Activated CD4-positive, alpha-beta T cell treated with anti-CD3 and anti-CD28 coated beads for 36 hours (primary cell): ENCODE measurements at regions of chr19 and their contacts with region 1.

Region 1: DNA sequence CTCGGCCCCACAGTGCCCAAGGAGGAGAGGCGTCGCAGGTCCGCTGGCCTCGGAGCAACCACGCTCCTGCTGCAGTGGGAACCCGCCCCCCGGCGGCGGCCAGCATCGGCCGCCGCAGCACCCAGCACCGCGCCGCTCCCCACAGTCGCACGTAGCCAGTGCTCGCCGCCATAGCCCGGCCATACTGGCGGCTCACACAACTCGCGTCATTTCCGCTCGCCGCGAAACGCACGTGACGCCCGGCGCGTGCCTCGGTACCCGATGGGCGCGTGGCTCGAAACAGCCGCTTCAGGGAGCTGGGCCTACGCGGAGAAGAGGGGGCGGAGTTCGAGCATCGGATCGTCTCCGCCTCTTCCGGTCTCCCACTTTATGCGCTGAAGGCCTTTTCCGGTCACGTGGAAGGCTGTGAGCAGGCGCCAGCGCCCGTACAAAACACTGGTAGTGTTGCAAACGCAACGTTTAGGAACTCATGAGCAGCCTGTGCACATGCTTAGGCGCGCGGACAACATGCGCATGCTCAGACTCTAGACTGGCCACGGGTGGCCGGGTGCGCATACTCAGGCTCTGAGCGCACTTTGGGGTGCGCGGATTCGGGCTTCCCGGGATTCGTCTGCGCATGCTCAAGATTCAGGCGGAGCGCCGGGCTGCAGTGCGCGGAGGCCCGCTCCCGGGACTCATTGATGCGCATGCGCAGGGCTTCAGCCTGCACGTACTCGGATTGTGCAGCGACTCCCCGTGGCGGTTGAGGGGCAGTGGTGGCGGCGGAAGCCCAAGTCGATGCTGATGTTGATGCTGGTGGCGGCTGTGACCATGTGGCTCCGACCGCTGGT is at the starts of genes CATSPERD and LONP1:
- DNase-seq: peak; percentile 99
- ATAC-seq: peak; percentile 84
- H3K4me3 Mint-ChIP-seq: peak within 1 kb of the TSS; percentile 98
- H3K27ac Mint-ChIP-seq: peak within 1 kb of the TSS; percentile 99
- H3K4me1 Mint-ChIP-seq: peaks cover 27% of the 10 kb centered on the region
- H3K27me3 Mint-ChIP-seq: no peaks in the 10 kb centered on the region
- total RNA-seq, gene CATSPERD: not detected
- total RNA-seq, gene LONP1: 287 to 315 TPM

Region 2: DNA sequence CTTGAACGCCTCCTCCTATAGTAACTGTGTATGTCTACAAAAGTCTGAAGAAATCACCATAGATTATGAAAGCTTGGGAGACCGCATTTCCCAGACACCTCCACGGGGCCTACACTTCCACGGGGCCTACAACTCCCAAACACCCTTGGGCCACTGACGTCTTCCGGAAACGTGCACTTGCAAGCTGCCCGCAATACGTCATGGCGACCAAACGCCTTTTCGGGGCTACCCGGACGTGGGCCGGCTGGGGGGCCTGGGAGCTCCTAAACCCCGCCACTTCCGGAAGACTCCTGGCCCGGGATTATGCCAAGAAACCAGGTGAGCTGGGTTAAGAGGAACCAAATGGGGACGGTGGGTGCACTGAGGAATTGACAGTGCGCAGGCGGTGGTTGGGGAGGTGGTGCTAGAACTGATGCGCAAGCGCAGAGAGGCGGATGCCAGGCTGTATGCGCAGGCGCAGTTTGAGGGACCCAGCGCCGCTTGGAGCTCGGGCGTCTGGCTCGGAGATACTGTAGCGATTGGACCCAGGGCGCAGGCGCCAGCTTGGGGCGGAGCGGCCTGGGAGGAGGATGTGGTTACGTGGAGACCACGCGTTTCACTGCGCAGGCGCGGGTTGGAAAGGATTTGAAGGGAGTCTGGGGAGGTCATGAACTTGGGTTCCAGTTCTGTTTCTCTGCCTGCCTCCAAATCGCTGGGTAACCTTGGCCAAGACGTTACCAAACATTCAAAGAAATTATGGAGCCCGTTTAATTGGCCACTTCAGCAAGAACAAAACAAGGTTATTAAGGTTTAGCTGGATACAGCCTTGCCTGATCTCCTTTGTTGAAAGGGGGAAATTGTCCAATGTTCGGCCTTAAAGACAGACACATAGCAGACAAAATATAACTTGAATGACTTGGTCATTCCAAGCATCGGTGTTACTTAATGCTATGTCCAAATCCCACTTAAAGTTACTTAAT is 1957.4 kb before region 1 on chr19 and contains the start of gene MRPL54:
- CTCF ChIA-PET with region 1: no interaction called
- POLR2A ChIA-PET with region 1: no interaction called
- intact Hi-C with region 1: loop called in 1 of 2 experiments (anchors 5 kb)
- DNase-seq: peak; percentile 100
- ATAC-seq: peak; percentile 88
- H3K4me3 Mint-ChIP-seq: peak within 1 kb of the TSS; percentile 100
- H3K27ac Mint-ChIP-seq: peak within 1 kb of the TSS; percentile 99
- H3K4me1 Mint-ChIP-seq: peaks cover 39% of the 10 kb centered on the region
- H3K27me3 Mint-ChIP-seq: no peaks in the 10 kb centered on the region
- total RNA-seq, gene MRPL54: 54.8 to 63.9 TPM

Region 3: GRCh38 chr19:4909897-4910593 is 810.1 kb before region 1 on chr19:
- CTCF ChIA-PET with region 1: no interaction called
- POLR2A ChIA-PET with region 1: interaction called, 11 read pairs
- intact Hi-C with region 1: no loop called
- DNase-seq: peak; percentile 98
- ATAC-seq: peak; percentile 78
- H3K4me3 Mint-ChIP-seq: peak overlapping the region; percentile 83
- H3K27ac Mint-ChIP-seq: peak overlapping the region; percentile 90
- H3K4me1 Mint-ChIP-seq: peaks cover 42% of the 10 kb centered on the region
- H3K27me3 Mint-ChIP-seq: no peaks in the 10 kb centered on the region

Region 4: GRCh38 chr19:5690125-5690954 is 29.8 kb before region 1 on chr19 and contains the start of gene RPL36:
- CTCF ChIA-PET with region 1: interaction called, 32 read pairs
- POLR2A ChIA-PET with region 1: interaction called, 20 read pairs
- intact Hi-C with region 1: loop called (anchors 1 kb)
- DNase-seq: peak; percentile 100
- ATAC-seq: peak; percentile 54
- H3K4me3 Mint-ChIP-seq: peak within 1 kb of the TSS; percentile 100
- H3K27ac Mint-ChIP-seq: peak within 1 kb of the TSS; percentile 96
- H3K4me1 Mint-ChIP-seq: peaks cover 21% of the 10 kb centered on the region
- H3K27me3 Mint-ChIP-seq: no peaks in the 10 kb centered on the region
- total RNA-seq, gene RPL36: 1,452 to 1,530 TPM

Region 5: GRCh38 chr19:5827891-5828660 is 107.9 kb after region 1 on chr19:
- CTCF ChIA-PET with region 1: no interaction called
- POLR2A ChIA-PET with region 1: interaction called, 12 read pairs
- intact Hi-C with region 1: loop called in 1 of 2 experiments (anchors 1 kb)
- DNase-seq: peak; percentile 98
- ATAC-seq: peak; percentile 84
- H3K4me3 Mint-ChIP-seq: peak overlapping the region; percentile 92
- H3K27ac Mint-ChIP-seq: peak overlapping the region; percentile 96
- H3K4me1 Mint-ChIP-seq: peaks cover 4% of the 10 kb centered on the region
- H3K27me3 Mint-ChIP-seq: no peaks in the 10 kb centered on the region

Region 6: GRCh38 chr19:5880604-5881078 is 160.5 kb after region 1 on chr19:
- CTCF ChIA-PET with region 1: no interaction called
- POLR2A ChIA-PET with region 1: no interaction called
- intact Hi-C with region 1: no loop called
- DNase-seq: no peak
- ATAC-seq: no peak
- H3K4me3 Mint-ChIP-seq: no peak overlapping the region
- H3K27ac Mint-ChIP-seq: no peak overlapping the region
- H3K4me1 Mint-ChIP-seq: no peaks in the 10 kb centered on the region
- H3K27me3 Mint-ChIP-seq: peaks cover 10% of the 10 kb centered on the region

Region 7: DNA sequence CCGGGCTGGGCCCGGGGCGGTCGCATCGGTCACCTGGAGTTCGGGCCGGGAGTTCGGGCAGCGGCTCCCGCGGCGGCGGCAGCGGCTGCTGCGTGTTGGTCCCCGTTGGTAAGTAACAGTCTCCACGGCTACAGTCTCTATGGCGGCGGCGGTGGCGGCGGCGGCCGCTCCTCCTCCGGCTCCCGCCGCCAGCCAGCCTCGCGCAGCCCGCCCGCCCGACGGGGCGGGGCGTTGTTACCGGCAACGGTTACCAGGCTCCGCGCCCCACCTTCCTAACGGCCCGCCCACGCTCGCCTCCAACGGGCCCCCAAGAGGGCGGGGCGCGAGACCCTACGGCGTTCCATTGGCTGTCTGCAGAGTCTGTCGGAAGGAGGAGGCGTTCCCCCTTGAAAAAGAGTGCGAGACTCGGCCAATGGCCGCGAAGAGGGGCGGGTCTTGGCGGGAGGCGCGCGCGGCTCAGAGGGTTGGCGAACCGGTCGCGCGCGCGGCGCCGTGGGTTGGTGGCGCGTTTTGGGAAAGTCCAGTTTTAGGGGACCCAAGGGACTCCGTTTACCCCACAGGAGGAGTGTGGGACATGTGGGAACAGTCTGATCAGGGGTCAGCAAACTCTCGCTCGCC is 390.3 kb after region 1 on chr19 and contains the start of gene RFX2:
- CTCF ChIA-PET with region 1: no interaction called
- POLR2A ChIA-PET with region 1: no interaction called
- intact Hi-C with region 1: loop called in 1 of 2 experiments (anchors 1 kb)
- DNase-seq: peak; percentile 100
- ATAC-seq: peak; percentile 98
- H3K4me3 Mint-ChIP-seq: peak within 1 kb of the TSS; percentile 76
- H3K27ac Mint-ChIP-seq: peak within 1 kb of the TSS; percentile 60
- H3K4me1 Mint-ChIP-seq: peaks cover 23% of the 10 kb centered on the region
- H3K27me3 Mint-ChIP-seq: peaks cover 16% of the 10 kb centered on the region
- total RNA-seq, gene RFX2: 8.6 to 8.9 TPM

Region 8: DNA sequence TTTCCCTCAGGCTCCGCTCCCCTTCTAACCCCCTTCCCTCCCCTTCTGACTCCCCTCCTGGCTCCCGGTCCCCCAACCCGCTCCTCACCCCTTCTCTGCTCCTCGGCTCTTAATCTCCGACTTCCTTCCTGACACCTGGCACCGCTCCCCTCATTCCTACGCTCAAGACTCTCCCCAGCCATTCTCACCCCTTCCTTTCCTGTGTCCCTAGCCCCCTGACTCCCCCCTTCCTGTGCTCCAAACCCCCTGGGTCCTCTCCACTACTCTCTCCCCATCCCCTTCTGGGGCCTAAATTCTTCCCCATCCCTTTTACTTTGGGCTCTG is 641.8 kb after region 1 on chr19:
- CTCF ChIA-PET with region 1: no interaction called
- POLR2A ChIA-PET with region 1: no interaction called
- intact Hi-C with region 1: loop called in 1 of 2 experiments (anchors 1 kb)
- DNase-seq: no peak
- ATAC-seq: peak; percentile 1
- H3K4me3 Mint-ChIP-seq: peak overlapping the region; percentile 85
- H3K27ac Mint-ChIP-seq: peak overlapping the region; percentile 91
- H3K4me1 Mint-ChIP-seq: peaks cover 16% of the 10 kb centered on the region
- H3K27me3 Mint-ChIP-seq: no peaks in the 10 kb centered on the region